H1 (cell line): ENCODE measurements at regions of chr1 and their contacts with region 1.

Region 1: GRCh38 chr1:155277070-155277895 is at the start of gene HCN3:
- DNase-seq: peak; percentile 95 to 100
- H3K4me3 ChIP-seq: peak within 1 kb of the TSS; percentile 60 to 82 (median 76)
- H3K27ac ChIP-seq: no peak within 1 kb of the TSS
- H3K4me1 ChIP-seq: peaks cover 9 to 17% (median 13%) of the 10 kb centered on the region in 4 experiments
- H3K27me3 ChIP-seq: peaks cover 0 to 3% (median 0%) of the 10 kb centered on the region in 4 experiments; a peak in 2 of 7 replicates
- CTCF ChIP-seq: peak; percentile 42 to 52 (median 51)
- EP300 ChIP-seq: no peak
- POLR2A ChIP-seq: no peak
- RAD21 ChIP-seq: peak in 1 of 2 experiments; percentile 30; a peak in 2 of 4 replicates
- total RNA-seq, gene HCN3: 5.5 and 6.4 TPM in 2 replicates

Region 2: GRCh38 chr1:155105604-155106022 is 171.7 kb before region 1 on chr1:
- CTCF ChIA-PET with region 1: no interaction called
- POLR2A ChIA-PET with region 1: no interaction called
- DNase-seq: no peak
- H3K4me3 ChIP-seq: no peak overlapping the region
- H3K27ac ChIP-seq: no peak overlapping the region
- H3K4me1 ChIP-seq: no peaks in the 10 kb centered on the region
- H3K27me3 ChIP-seq: no peaks in the 10 kb centered on the region
- CTCF ChIP-seq: no peak
- EP300 ChIP-seq: no peak
- POLR2A ChIP-seq: no peak
- RAD21 ChIP-seq: no peak

Region 3: GRCh38 chr1:155261852-155262673 is 15.2 kb before region 1 on chr1 and contains the start of gene SCAMP3:
- CTCF ChIA-PET with region 1: interaction called, 8 read pairs
- POLR2A ChIA-PET with region 1: interaction called, 87 read pairs
- DNase-seq: peak; percentile 90 to 95
- H3K4me3 ChIP-seq: peak within 1 kb of the TSS; percentile 71 to 89 (median 76)
- H3K27ac ChIP-seq: peak within 1 kb of the TSS; percentile 27; the same call in 1 of the 2 replicates
- H3K4me1 ChIP-seq: peaks cover 0 to 8% (median 4%) of the 10 kb centered on the region in 4 experiments; a peak in 3 of 7 replicates
- H3K27me3 ChIP-seq: no peaks in the 10 kb centered on the region
- CTCF ChIP-seq: no peak
- EP300 ChIP-seq: no peak
- POLR2A ChIP-seq: peak; percentile 59 to 94
- RAD21 ChIP-seq: no peak
- total RNA-seq, gene SCAMP3: 48.9 and 50.0 TPM in 2 replicates

Region 4: GRCh38 chr1:155295183-155295941 is 18.1 kb after region 1 on chr1:
- CTCF ChIA-PET with region 1: interaction called, 22 read pairs
- POLR2A ChIA-PET with region 1: interaction called, 10 read pairs
- DNase-seq: peak in 1 of 2 experiments; percentile 87
- H3K4me3 ChIP-seq: peak overlapping the region; percentile 52 to 89 (median 84)
- H3K27ac ChIP-seq: no peak overlapping the region
- H3K4me1 ChIP-seq: peaks cover 3 to 23% (median 10%) of the 10 kb centered on the region in 4 experiments; a peak in 6 of 7 replicates
- H3K27me3 ChIP-seq: peaks cover 0 to 23% (median 14%) of the 10 kb centered on the region in 4 experiments; a peak in 5 of 7 replicates
- CTCF ChIP-seq: no peak
- EP300 ChIP-seq: no peak
- POLR2A ChIP-seq: no peak
- RAD21 ChIP-seq: no peak

Region 5: GRCh38 chr1:155308493-155309422 is 31.5 kb after region 1 on chr1 and contains the start of gene FDPS:
- CTCF ChIA-PET with region 1: interaction called, 79 read pairs
- POLR2A ChIA-PET with region 1: interaction called, 10 read pairs
- DNase-seq: peak; percentile 89 to 97
- H3K4me3 ChIP-seq: peak within 1 kb of the TSS; percentile 79 to 100 (median 89)
- H3K27ac ChIP-seq: peak within 1 kb of the TSS; percentile 65
- H3K4me1 ChIP-seq: peaks cover 0 to 8% (median 4%) of the 10 kb centered on the region in 4 experiments; a peak in 6 of 7 replicates
- H3K27me3 ChIP-seq: no peaks in the 10 kb centered on the region; a peak in 1 of 7 replicates
- CTCF ChIP-seq: 0 out of 4 replicates have a peak, but pooled peaks of 1 of the 3 experiments have one; percentile 7
- EP300 ChIP-seq: no peak
- POLR2A ChIP-seq: peak; percentile 85 to 91
- RAD21 ChIP-seq: 0 out of 4 replicates have a peak, but pooled peaks of 1 of the 2 experiments have one; percentile 6
- total RNA-seq, gene FDPS: 368 and 370 TPM in 2 replicates

Region 6: GRCh38 chr1:155316922-155317321 is 39.6 kb after region 1 on chr1:
- CTCF ChIA-PET with region 1: interaction called, 50 read pairs
- POLR2A ChIA-PET with region 1: interaction called, 16 read pairs
- DNase-seq: no peak
- H3K4me3 ChIP-seq: no peak overlapping the region
- H3K27ac ChIP-seq: no peak overlapping the region
- H3K4me1 ChIP-seq: peaks cover 2 to 12% (median 6%) of the 10 kb centered on the region in 4 experiments; a peak in 6 of 7 replicates
- H3K27me3 ChIP-seq: peaks cover 0 to 3% (median 2%) of the 10 kb centered on the region in 4 experiments; a peak in 4 of 7 replicates
- CTCF ChIP-seq: no peak
- EP300 ChIP-seq: no peak
- POLR2A ChIP-seq: no peak
- RAD21 ChIP-seq: no peak